ENCODE measurements at regions of chr22 and their contacts with region 1.

Region 1: GRCh38 chr22:37316875-37317371 is 34.6 kb downstream of the CYTH4 start:
- DNase-seq: peak; percentile 84 to 87
- ATAC-seq: peak; percentile 79 to 95
- H3K4me3 ChIP-seq: no peak overlapping the region
- H3K27ac ChIP-seq: peak overlapping the region; percentile 33 to 85
- H3K4me1 ChIP-seq: peaks cover 55% of the 10 kb centered on the region
- CTCF ChIP-seq: peak; percentile 71
- EP300 ChIP-seq: no peak
- POLR2A ChIP-seq: no peak
- RAD21 ChIP-seq: peak; percentile 96

Region 2: DNA sequence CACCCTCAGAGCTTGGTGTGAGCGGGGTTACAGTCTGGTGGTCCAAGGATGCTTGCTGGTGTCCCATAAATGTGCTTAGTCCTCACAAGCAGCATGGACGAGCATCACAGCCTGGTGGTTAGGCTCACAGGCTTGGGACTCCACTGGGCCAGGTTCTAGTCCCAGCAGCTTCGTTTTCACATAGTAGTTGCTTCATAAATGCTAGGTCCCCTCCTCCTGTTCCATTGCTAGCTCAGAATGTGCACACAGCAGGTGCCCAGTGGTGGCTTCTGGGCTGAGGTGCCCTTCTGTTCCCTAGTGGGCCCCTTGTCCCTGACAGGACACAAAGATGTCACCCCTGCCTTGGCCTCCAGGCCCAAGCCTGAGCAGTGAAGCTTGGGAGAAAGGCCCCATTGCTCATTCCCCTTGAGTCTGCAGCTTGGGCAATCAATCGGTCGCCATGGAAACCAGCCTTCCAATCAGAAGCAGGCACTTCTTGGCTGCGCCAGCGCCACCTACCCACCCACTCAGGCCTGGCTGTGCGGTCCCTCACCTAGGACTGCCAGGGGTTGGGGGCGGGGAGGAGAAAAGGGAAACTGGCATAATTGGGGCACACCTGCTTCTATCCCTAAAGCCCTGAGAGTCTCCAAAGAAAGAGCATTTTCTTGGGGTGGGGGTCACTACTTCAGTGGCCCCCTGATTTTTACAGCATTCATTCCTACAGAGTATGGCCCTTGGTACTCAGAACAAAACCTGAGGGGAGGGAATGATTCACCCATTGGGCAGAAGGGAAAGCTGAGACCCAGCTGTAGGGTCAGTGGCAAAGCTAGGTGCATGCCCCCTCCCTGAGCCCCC is 13.5 kb after region 1 on chr22:
- CTCF ChIA-PET with region 1: interaction called, 30 read pairs
- POLR2A ChIA-PET with region 1: no interaction called
- DNase-seq: peak; percentile 79 to 87
- ATAC-seq: peak; percentile 62 to 77
- H3K4me3 ChIP-seq: no peak overlapping the region
- H3K27ac ChIP-seq: peak overlapping the region; percentile 76 to 94
- H3K4me1 ChIP-seq: peaks cover 71% of the 10 kb centered on the region
- CTCF ChIP-seq: peak; percentile 24; the same call in 2 of the 3 replicates
- EP300 ChIP-seq: no peak
- POLR2A ChIP-seq: no peak
- RAD21 ChIP-seq: no peak

Region 3: DNA sequence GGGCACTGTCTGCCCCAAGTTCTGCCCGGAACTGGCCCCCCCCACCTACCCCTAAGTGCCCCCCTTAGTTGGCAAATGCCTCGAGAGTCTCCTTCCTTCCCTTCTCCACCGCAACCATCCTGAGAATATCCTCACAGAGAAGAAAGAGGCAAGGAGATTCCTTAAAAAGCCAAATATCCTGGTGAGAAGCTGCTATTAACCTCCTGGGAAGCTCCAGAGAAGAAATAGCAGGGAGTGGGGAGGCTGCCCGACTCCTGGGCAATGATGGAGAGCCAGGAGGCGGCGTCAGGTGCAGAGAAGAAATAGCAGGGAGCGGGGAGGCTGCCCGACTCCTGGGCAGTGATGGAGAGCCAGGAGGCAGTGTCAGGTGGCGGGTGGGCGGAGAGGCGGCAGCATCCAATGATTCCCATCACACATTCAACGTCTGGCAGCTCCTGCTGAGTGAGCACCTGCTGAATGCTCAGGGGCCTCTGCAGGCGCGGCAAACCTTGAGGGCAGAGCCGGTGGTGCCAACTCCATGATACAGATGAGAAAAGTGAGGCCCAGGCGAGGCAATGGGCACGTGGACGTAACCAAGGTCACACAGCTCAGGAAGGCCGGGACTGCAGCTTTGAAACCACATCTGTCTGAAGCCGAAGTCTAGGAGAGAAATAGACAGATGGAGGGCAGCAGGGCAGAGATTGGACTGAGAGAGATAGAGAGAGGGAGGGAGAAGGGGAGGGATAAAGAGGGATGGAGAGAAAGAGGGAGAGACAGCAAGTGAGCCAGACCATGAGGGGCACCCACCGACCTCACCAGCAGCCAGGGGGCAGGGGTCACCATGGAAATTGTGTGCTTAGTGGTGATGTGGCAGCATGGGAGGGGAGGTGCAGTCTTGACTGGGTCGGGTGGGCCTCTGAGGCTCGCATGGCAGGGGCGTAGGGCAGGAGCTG is 23.7 kb after region 1 on chr22:
- CTCF ChIA-PET with region 1: interaction called, 11 read pairs
- POLR2A ChIA-PET with region 1: no interaction called
- DNase-seq: no peak
- ATAC-seq: no peak
- H3K4me3 ChIP-seq: no peak overlapping the region
- H3K27ac ChIP-seq: peak overlapping the region in 1 of 2 experiments; percentile 24; a peak in 1 of 6 replicates
- H3K4me1 ChIP-seq: peaks cover 24% of the 10 kb centered on the region
- CTCF ChIP-seq: no peak
- EP300 ChIP-seq: no peak
- POLR2A ChIP-seq: no peak
- RAD21 ChIP-seq: no peak

Region 4: GRCh38 chr22:37462983-37463382 is 146.1 kb after region 1 on chr22:
- CTCF ChIA-PET with region 1: interaction called, 134 read pairs
- POLR2A ChIA-PET with region 1: no interaction called
- DNase-seq: no peak
- ATAC-seq: peak; percentile 61 to 65; a peak in 2 of 6 replicates
- H3K4me3 ChIP-seq: no peak overlapping the region
- H3K27ac ChIP-seq: no peak overlapping the region
- H3K4me1 ChIP-seq: no peaks in the 10 kb centered on the region
- CTCF ChIP-seq: no peak
- EP300 ChIP-seq: no peak
- POLR2A ChIP-seq: no peak
- RAD21 ChIP-seq: no peak

Region 5: GRCh38 chr22:37492428-37493344 is 175.8 kb after region 1 on chr22:
- CTCF ChIA-PET with region 1: interaction called, 11 read pairs
- POLR2A ChIA-PET with region 1: no interaction called
- DNase-seq: peak; percentile 62 to 71
- ATAC-seq: peak; percentile 59 to 79
- H3K4me3 ChIP-seq: no peak overlapping the region
- H3K27ac ChIP-seq: peak overlapping the region in 1 of 2 experiments; percentile 80; a peak in 4 of 6 replicates
- H3K4me1 ChIP-seq: peaks cover 34% of the 10 kb centered on the region
- CTCF ChIP-seq: peak; percentile 39; the same call in 2 of the 3 replicates
- EP300 ChIP-seq: no peak
- POLR2A ChIP-seq: no peak
- RAD21 ChIP-seq: peak; percentile 12 to 19; a peak in 1 of 5 replicates

Measured in A549 (cell line).